Endothelial cell of umbilical vein (primary cell): ENCODE measurements at regions of chr2 and their contacts with region 1.

Region 1: DNA sequence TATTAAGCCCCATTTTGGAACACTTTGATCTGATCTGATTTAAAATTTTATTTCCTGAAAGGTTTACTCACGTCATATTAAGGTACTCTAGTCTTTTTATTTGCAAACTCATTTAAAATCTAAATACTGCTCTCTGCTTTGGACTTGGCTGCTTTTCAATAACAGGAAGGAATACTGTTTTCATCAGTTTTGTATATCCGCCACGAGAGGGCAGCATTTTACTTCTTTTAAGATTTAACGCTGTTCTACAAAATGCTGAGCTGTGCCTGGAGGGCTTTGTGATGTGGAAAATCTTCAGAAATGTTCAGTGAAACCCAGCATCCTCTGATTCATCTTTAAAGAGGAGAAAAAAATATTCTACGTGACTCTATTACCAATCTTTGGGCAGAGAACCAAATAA is 37.5 kb upstream of the SLC38A11 start:
- DNase-seq: peak; percentile 71
- H3K4me3 ChIP-seq: no peak overlapping the region
- H3K27ac ChIP-seq: no peak overlapping the region
- H3K4me1 ChIP-seq: no peaks in the 10 kb centered on the region
- H3K27me3 ChIP-seq: no peaks in the 10 kb centered on the region
- CTCF ChIP-seq: peak; percentile 19 to 22
- POLR2A ChIP-seq: no peak

Region 2: GRCh38 chr2:164737612-164738081 is 255.2 kb before region 1 on chr2:
- CTCF ChIA-PET with region 1: interaction called, 14 read pairs
- POLR2A ChIA-PET with region 1: no interaction called
- dilution Hi-C with region 1: no loop called
- intact Hi-C with region 1: loop called (anchors 1 kb)
- DNase-seq: peak; percentile 82
- H3K4me3 ChIP-seq: no peak overlapping the region
- H3K27ac ChIP-seq: no peak overlapping the region
- H3K4me1 ChIP-seq: peaks cover 8% of the 10 kb centered on the region
- H3K27me3 ChIP-seq: no peaks in the 10 kb centered on the region
- CTCF ChIP-seq: peak; percentile 48 to 61
- POLR2A ChIP-seq: no peak

Region 3: GRCh38 chr2:165003433-165004130 is 10.8 kb after region 1 on chr2:
- CTCF ChIA-PET with region 1: interaction called, 35 read pairs
- POLR2A ChIA-PET with region 1: no interaction called
- dilution Hi-C with region 1: no loop called
- intact Hi-C with region 1: no loop called
- DNase-seq: no peak
- H3K4me3 ChIP-seq: no peak overlapping the region
- H3K27ac ChIP-seq: no peak overlapping the region
- H3K4me1 ChIP-seq: no peaks in the 10 kb centered on the region
- H3K27me3 ChIP-seq: peaks cover 6 to 11% of the 10 kb centered on the region in 2 experiments
- CTCF ChIP-seq: no peak
- POLR2A ChIP-seq: no peak

Region 4: GRCh38 chr2:165015052-165015642 is 22.3 kb after region 1 on chr2:
- CTCF ChIA-PET with region 1: interaction called, 48 read pairs
- POLR2A ChIA-PET with region 1: no interaction called
- dilution Hi-C with region 1: no loop called
- intact Hi-C with region 1: no loop called
- DNase-seq: peak; percentile 61
- H3K4me3 ChIP-seq: no peak overlapping the region
- H3K27ac ChIP-seq: no peak overlapping the region
- H3K4me1 ChIP-seq: no peaks in the 10 kb centered on the region
- H3K27me3 ChIP-seq: peaks cover 16 to 23% of the 10 kb centered on the region in 2 experiments
- CTCF ChIP-seq: peak; percentile 78 to 91
- POLR2A ChIP-seq: no peak

Region 5: GRCh38 chr2:165401285-165401852 is 408.6 kb after region 1 on chr2:
- CTCF ChIA-PET with region 1: interaction called, 5 read pairs
- POLR2A ChIA-PET with region 1: no interaction called
- dilution Hi-C with region 1: no loop called
- intact Hi-C with region 1: loop called (anchors 5 kb)
- DNase-seq: peak; percentile 77
- H3K4me3 ChIP-seq: no peak overlapping the region
- H3K27ac ChIP-seq: no peak overlapping the region
- H3K4me1 ChIP-seq: no peaks in the 10 kb centered on the region
- H3K27me3 ChIP-seq: peaks cover 22 to 30% of the 10 kb centered on the region in 2 experiments
- CTCF ChIP-seq: peak; percentile 43 to 46
- POLR2A ChIP-seq: no peak